Aorta (tissue), 5 donors: ENCODE measurements at regions of chr10 and their contacts with region 1.

Region 1: DNA sequence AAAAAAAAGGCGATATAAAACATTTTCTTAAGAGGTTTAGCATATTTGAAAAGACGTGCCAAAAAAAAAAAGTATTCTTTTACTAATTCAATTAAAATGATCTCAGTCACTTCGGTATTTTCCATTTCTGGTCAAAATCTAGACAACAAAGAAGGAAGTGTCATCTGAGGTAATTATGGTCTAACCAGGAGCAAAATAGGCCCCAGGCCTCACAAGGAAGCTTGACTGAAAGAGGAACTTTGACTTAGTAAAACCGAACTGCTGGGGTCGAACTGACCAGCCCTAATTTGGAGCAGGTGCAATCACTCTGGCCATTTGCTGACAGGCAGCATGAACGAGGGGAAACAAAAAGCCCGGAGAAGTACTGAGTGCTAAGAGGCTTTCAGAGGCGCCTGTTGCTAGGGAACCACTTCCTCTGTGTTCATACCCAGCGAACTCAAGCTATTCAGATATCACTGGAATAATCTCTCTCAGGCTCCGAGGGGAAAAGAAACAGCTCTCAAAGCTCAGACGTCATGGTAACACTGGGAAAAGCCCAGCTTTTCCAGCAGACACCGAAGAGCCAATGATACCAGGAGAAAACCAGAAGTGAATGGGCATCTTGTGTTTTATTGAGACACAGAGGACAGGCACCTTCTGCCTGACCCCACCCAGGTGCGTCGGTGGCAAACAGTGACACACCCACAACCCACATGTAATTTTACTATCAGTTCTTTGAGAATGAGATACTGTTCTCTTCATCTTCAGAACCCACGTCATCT is 126.5 kb downstream of the FAM107B start:
- DNase-seq: peak in 1 of 2 donors; percentile 83
- ATAC-seq: peak; percentile 93
- H3K4me3 ChIP-seq: no peak overlapping the region
- H3K27ac ChIP-seq: peak overlapping the region; percentile 60 to 96
- H3K4me1 ChIP-seq: peaks cover 0 to 2% of the 10 kb centered on the region in 2 donors
- H3K27me3 ChIP-seq: no peaks in the 10 kb centered on the region

Region 2: DNA sequence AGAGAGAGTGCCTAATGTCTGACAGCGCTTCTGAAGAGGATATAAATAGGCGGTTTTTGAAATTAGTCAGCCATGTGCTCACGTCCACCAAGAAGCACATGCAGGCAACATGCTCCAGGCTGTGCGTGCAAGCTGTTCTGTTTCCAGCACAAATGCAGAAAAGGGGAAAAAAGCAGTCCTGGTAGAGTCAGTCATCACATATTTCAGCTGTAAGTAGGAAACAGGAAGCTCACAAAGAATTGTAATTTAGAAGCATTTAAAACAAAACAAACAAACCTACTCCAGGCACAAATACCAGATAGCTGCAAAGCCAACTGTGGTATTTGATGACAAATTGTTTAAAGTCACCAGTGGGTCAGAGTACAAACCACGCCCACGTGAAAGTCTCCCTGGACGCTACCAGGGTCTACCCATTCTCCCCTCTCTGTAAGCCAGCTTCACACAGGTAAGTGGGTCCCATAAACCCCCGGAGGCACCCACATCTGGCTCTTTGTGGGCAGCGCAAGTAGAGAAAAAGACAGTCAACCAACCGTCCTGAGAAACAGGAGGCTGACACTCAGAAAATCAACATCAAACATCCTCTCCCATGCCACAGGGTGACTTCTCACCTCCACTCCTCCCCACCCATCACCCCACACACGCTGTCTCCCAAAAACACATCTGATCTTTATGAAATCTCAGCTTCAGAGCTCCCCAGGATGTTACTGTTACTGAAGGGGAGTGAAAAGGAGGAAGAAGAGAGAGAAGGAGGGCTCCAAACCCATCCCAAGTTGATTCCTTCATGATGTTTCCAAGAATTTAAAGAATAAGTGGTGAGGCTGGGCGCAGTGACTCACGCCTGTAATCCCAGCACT is 59.9 kb before region 1 on chr10:
- intact Hi-C with region 1: no loop called
- DNase-seq: peak in 1 of 2 donors; percentile 79
- ATAC-seq: peak; percentile 65
- H3K4me3 ChIP-seq: no peak overlapping the region
- H3K27ac ChIP-seq: peak overlapping the region in 1 of 2 donors; percentile 58
- H3K4me1 ChIP-seq: no peaks in the 10 kb centered on the region
- H3K27me3 ChIP-seq: no peaks in the 10 kb centered on the region

Region 3: GRCh38 chr10:14736600-14737081 is 88.5 kb after region 1 on chr10:
- intact Hi-C with region 1: loop called (anchors 5 kb)
- DNase-seq: no peak
- ATAC-seq: peak; percentile 62
- H3K4me3 ChIP-seq: no peak overlapping the region
- H3K27ac ChIP-seq: peak overlapping the region; percentile 73 to 77
- H3K4me1 ChIP-seq: peaks cover 0 to 3% of the 10 kb centered on the region in 2 donors
- H3K27me3 ChIP-seq: no peaks in the 10 kb centered on the region

Region 4: GRCh38 chr10:14954001-14954770 is 306.0 kb after region 1 on chr10 and contains the start of gene DCLRE1C:
- intact Hi-C with region 1: no loop called
- DNase-seq: peak; percentile 94 to 96
- ATAC-seq: peak; percentile 98
- H3K4me3 ChIP-seq: peak within 1 kb of the TSS; percentile 64 to 69
- H3K27ac ChIP-seq: peak within 1 kb of the TSS in 1 of 2 donors; percentile 89
- H3K4me1 ChIP-seq: peaks cover 2 to 3% of the 10 kb centered on the region in 2 donors
- H3K27me3 ChIP-seq: no peaks in the 10 kb centered on the region
- total RNA-seq, gene DCLRE1C: 9.3 to 16.6 TPM